A673 (cell line): ENCODE measurements at regions of chr12 and their contacts with region 1.

Region 1: GRCh38 chr12:66409195-66409871 is 107.0 kb downstream of the HELB start:
- DNase-seq: peak; percentile 77
- H3K4me3 ChIP-seq: no peak overlapping the region
- H3K27ac ChIP-seq: no peak overlapping the region
- H3K4me1 ChIP-seq: no peaks in the 10 kb centered on the region
- H3K27me3 ChIP-seq: peaks cover 6% of the 10 kb centered on the region
- CTCF ChIP-seq: peak; percentile 77

Region 2: GRCh38 chr12:65430571-65431306 is 978.6 kb before region 1 on chr12:
- CTCF ChIA-PET with region 1: no interaction called
- POLR2A ChIA-PET with region 1: no interaction called
- intact Hi-C with region 1: no loop called
- DNase-seq: peak; percentile 82
- H3K4me3 ChIP-seq: no peak overlapping the region
- H3K27ac ChIP-seq: peak overlapping the region; percentile 60
- H3K4me1 ChIP-seq: peaks cover 37% of the 10 kb centered on the region
- H3K27me3 ChIP-seq: no peaks in the 10 kb centered on the region
- CTCF ChIP-seq: no peak

Region 3: DNA sequence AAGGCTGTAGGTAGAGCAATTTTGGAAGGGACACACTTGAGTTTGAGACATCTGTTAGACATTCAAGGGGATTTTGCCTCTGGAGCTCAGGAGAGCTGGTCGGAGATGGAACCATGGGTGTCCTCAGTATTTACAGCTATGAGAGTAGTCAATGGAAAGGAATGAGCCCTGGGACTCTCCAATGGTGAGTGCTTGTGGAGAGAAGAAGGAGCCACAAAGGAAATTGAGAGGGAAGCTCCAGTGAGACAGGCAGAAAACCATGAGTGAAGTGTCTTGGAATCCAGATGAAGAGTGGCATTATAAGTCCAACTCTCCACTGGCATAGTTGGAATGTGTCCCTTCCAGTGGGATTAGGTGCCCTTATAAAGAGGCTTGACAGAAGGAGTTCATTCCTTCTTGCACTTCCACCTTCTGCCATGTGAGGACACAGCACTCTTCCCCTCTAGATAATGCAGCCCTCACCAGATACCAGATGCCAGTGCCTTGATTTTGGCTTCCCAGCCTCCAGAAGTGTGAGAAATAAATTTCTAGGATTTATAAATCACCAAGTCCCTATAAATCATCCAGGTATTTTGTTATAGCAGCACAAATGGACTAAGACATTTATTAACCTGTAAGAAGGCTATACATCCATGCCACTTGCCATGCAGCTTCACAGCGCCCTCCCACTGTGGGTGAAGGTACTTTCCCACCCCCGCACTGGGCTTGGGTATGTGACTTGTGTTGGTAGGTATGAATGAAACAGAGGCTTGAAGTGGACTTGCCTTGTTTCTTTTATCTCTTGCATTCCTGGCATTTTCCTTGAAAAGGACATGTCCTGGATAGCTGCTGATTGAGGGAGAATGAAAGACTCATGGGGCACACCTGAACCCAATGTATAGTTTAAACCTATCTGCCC is 306.1 kb before region 1 on chr12:
- CTCF ChIA-PET with region 1: no interaction called
- POLR2A ChIA-PET with region 1: no interaction called
- intact Hi-C with region 1: no loop called
- DNase-seq: no peak
- H3K4me3 ChIP-seq: no peak overlapping the region
- H3K27ac ChIP-seq: no peak overlapping the region
- H3K4me1 ChIP-seq: peaks cover 39% of the 10 kb centered on the region
- H3K27me3 ChIP-seq: no peaks in the 10 kb centered on the region
- CTCF ChIP-seq: peak; percentile 39; the same call in 1 of the 2 replicates

Region 4: DNA sequence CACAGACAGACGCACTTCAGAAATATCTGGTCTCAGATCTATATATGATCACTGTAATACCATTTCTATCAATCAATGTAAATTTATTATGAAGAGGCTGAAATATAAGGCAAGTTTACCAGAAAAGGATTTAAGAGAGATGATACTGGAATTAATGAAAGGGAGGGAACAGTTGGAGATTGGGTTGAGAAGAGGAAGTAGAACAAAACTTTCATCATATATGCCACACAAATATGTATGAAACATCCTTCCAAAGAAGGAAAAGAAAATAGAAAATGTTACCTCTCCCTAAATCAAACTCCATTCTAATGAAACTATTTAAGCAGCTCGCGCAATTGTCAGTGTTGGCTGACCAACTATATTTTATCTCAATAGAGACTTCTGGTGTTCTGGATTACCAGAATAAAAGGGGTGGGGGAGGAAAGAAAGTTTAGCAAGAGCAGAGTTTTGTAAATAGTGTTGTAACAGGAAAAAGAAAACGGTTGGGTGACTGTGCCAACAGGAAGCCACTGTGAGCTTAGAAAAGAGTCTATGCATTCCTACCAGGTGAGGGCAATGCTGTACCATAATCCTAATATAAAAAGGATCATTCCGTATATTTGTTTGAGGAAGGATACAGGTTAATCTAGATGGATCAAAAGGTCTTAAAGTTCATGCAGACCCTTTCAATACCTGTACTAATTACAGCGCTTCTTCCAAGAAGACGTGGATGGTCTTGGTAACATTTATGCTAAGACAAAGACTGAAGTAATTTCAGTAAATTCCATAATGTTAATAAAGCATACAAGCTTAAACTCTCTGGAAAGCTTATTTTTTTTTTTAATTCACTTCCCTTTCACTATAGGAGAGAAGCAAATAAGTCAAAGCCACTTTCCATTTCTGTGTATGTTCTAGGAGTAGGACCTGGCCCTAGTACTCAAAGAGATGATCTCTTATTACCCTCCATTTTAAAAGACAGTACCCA is 264.3 kb before region 1 on chr12:
- CTCF ChIA-PET with region 1: interaction called, 3 read pairs
- POLR2A ChIA-PET with region 1: no interaction called
- intact Hi-C with region 1: loop called (anchors 2 kb)
- DNase-seq: peak; percentile 76
- H3K4me3 ChIP-seq: no peak overlapping the region
- H3K27ac ChIP-seq: peak overlapping the region; percentile 17
- H3K4me1 ChIP-seq: peaks cover 11% of the 10 kb centered on the region
- H3K27me3 ChIP-seq: no peaks in the 10 kb centered on the region
- CTCF ChIP-seq: peak; percentile 81

Region 5: GRCh38 chr12:66269757-66270383 is 139.5 kb before region 1 on chr12:
- CTCF ChIA-PET with region 1: no interaction called
- POLR2A ChIA-PET with region 1: no interaction called
- intact Hi-C with region 1: loop called (anchors 2 kb)
- DNase-seq: peak; percentile 67
- H3K4me3 ChIP-seq: no peak overlapping the region
- H3K27ac ChIP-seq: no peak overlapping the region
- H3K4me1 ChIP-seq: no peaks in the 10 kb centered on the region
- H3K27me3 ChIP-seq: no peaks in the 10 kb centered on the region
- CTCF ChIP-seq: peak; percentile 78

Region 6: DNA sequence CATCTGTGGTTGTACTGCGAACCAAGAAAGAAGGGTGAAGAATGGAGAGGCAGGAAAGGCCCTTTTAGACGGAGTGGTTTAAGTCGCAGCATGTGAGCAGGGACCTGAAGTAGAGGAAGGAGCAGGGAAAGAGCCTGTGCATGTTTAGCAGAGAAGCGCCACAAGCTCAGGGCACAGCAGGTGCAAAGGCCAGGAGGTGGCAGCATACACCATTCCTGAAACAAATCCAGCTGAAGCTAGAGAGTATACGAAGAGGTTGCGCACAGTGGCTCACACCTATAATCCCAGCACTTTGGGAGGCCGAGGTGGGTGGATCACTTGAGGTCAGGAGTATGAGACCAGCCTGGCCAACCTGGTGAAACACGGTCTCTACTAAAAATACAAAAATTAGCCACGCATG is 57.1 kb before region 1 on chr12:
- CTCF ChIA-PET with region 1: no interaction called
- POLR2A ChIA-PET with region 1: no interaction called
- intact Hi-C with region 1: loop called (anchors 2 kb)
- DNase-seq: peak; percentile 34
- H3K4me3 ChIP-seq: no peak overlapping the region
- H3K27ac ChIP-seq: no peak overlapping the region
- H3K4me1 ChIP-seq: peaks cover 3% of the 10 kb centered on the region
- H3K27me3 ChIP-seq: no peaks in the 10 kb centered on the region
- CTCF ChIP-seq: peak; percentile 48

Region 7: GRCh38 chr12:66388517-66388916 is 20.8 kb before region 1 on chr12:
- CTCF ChIA-PET with region 1: no interaction called
- POLR2A ChIA-PET with region 1: no interaction called
- intact Hi-C with region 1: no loop called
- DNase-seq: no peak
- H3K4me3 ChIP-seq: no peak overlapping the region
- H3K27ac ChIP-seq: no peak overlapping the region
- H3K4me1 ChIP-seq: no peaks in the 10 kb centered on the region
- H3K27me3 ChIP-seq: no peaks in the 10 kb centered on the region
- CTCF ChIP-seq: no peak